ENCODE measurements at regions of chr2 and their contacts with region 1.

Region 1: GRCh38 chr2:119352357-119352756 is 14.3 kb downstream of the C2orf76 start:
- DNase-seq: peak in 2 of 3 donors; percentile 20 to 37
- H3K4me3 ChIP-seq: peak overlapping the region in 1 of 7 experiments; percentile 24
- H3K27ac ChIP-seq: no peak overlapping the region
- H3K4me1 ChIP-seq: peaks cover 0 to 19% (median 12%) of the 10 kb centered on the region in 4 experiments
- H3K27me3 ChIP-seq: no peaks in the 10 kb centered on the region

Region 2: DNA sequence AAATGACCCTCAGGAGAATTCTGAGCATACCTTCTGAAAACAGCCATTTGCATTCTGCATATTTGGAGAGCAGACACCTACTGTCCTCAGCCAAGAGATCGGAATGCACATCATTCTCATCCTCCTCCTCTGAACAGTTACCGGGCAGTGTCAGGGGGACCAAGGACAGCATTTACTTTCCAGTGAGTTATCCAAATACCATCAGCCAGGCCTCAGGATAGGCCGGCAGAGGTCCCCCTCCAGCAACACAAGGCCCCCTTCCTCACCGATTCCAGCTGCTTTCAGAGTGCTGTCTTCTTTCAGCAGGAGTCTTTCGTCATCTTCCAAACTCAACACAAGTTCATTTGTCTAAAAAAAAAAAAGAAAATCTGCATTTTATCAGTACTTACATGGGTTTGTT is 41.0 kb before region 1 on chr2:
- CTCF ChIA-PET with region 1: interaction called, 11 read pairs
- POLR2A ChIA-PET with region 1: no interaction called
- DNase-seq: no peak
- H3K4me3 ChIP-seq: no peak overlapping the region
- H3K27ac ChIP-seq: no peak overlapping the region
- H3K4me1 ChIP-seq: no peaks in the 10 kb centered on the region
- H3K27me3 ChIP-seq: no peaks in the 10 kb centered on the region

Region 3: GRCh38 chr2:119338826-119339561 is 13.4 kb before region 1 on chr2:
- CTCF ChIA-PET with region 1: interaction called, 11 read pairs
- POLR2A ChIA-PET with region 1: no interaction called
- DNase-seq: peak; percentile 86 to 98 (median 95)
- H3K4me3 ChIP-seq: peak overlapping the region in 3 of 7 experiments; percentile 7 to 33 (median 10)
- H3K27ac ChIP-seq: peak overlapping the region in 1 of 2 experiments; percentile 29
- H3K4me1 ChIP-seq: peaks cover 15 to 28% (median 20%) of the 10 kb centered on the region in 4 experiments
- H3K27me3 ChIP-seq: no peaks in the 10 kb centered on the region

Measured in common myeloid progenitor, CD34-positive (primary cell).